Activated T-helper 2 cell treated with anti-CD3 and anti-CD28 coated beads, Interferon-gamma antibody, Interleukin-2, Interleukin-4, amounts not matched to agents 10 μg/mL and 5 μg/mL and 100 μg/mL, durations not matched to agents 14 hours and 24 hours and 36 hours (primary cell): ENCODE measurements at regions of chr10 and their contacts with region 1.

Region 1: DNA sequence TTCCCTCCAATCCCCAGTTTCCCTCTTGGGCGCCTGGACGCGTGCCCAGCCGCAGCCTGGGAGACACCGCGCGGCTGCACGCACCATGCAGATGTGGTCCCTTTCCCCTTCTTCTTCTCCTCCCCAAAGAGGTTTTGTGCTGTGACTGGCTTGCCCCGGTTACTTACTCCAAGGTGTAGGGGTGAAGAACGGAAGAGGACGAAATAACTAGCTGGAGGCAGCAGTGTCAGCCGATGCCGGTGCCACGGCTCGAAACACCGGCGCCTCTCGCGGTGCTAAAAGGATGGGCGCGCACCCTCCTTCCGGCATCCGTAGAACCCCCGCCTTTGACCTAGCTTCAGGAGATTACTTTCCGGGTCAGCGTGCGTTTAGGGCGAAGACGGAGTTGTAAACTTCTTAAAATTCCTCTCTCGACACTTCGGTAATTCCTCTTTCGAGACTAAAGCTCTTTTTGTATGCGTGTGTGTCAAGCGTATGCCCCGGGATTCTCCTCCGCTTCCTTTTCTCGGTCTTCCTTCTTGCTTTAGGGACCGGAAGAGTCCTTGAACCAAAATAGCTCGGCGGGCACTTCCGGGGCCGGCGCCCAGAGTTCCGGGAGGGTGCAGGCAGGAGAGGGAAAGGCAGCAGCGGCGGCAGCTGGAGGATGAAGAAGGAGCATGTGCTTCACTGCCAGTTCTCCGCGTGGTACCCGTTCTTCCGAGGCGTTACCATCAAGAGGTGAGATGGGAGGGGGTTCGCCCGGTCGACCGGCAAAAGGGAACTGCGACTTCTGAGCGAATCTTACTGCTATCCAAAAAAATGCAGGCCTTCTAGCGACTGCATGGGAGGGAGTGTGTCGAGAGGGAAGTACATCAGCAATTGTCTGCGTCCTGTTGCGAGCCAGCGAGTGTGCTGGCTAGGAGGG is at the starts of genes CDC123 and NUDT5:
- DNase-seq: peak; percentile 82
- H3K4me3 Mint-ChIP-seq: peak within 1 kb of the TSS; percentile 94
- H3K27ac Mint-ChIP-seq: peak within 1 kb of the TSS; percentile 98
- H3K4me1 Mint-ChIP-seq: peaks cover 39% of the 10 kb centered on the region
- H3K27me3 Mint-ChIP-seq: no peaks in the 10 kb centered on the region
- total RNA-seq, gene CDC123: 153 and 156 TPM in 2 replicates
- total RNA-seq, gene NUDT5: 109 and 112 TPM in 2 replicates

Region 2: GRCh38 chr10:12018438-12019282 is 177.2 kb before region 1 on chr10:
- intact Hi-C with region 1: no loop called
- DNase-seq: no peak
- H3K4me3 Mint-ChIP-seq: no peak overlapping the region
- H3K27ac Mint-ChIP-seq: no peak overlapping the region
- H3K4me1 Mint-ChIP-seq: peaks cover 15% of the 10 kb centered on the region
- H3K27me3 Mint-ChIP-seq: no peaks in the 10 kb centered on the region

Region 3: GRCh38 chr10:12042797-12043651 is 152.8 kb before region 1 on chr10 and contains the start of gene UPF2:
- intact Hi-C with region 1: loop called (anchors 1 kb)
- DNase-seq: peak; percentile 95
- H3K4me3 Mint-ChIP-seq: peak within 1 kb of the TSS; percentile 99
- H3K27ac Mint-ChIP-seq: peak within 1 kb of the TSS; percentile 96
- H3K4me1 Mint-ChIP-seq: peaks cover 23% of the 10 kb centered on the region
- H3K27me3 Mint-ChIP-seq: no peaks in the 10 kb centered on the region
- total RNA-seq, gene UPF2: 41.0 and 41.4 TPM in 2 replicates

Region 4: GRCh38 chr10:12121673-12122072 is 74.2 kb before region 1 on chr10:
- intact Hi-C with region 1: loop called (anchors 5 kb)
- DNase-seq: no peak
- H3K4me3 Mint-ChIP-seq: no peak overlapping the region
- H3K27ac Mint-ChIP-seq: peak overlapping the region; percentile 96
- H3K4me1 Mint-ChIP-seq: peaks cover 26% of the 10 kb centered on the region
- H3K27me3 Mint-ChIP-seq: no peaks in the 10 kb centered on the region

Region 5: GRCh38 chr10:12181065-12181775 is 14.6 kb before region 1 on chr10:
- intact Hi-C with region 1: loop called (anchors 2 kb)
- DNase-seq: peak; percentile 69
- H3K4me3 Mint-ChIP-seq: peak overlapping the region; percentile 13
- H3K27ac Mint-ChIP-seq: peak overlapping the region; percentile 88
- H3K4me1 Mint-ChIP-seq: peaks cover 26% of the 10 kb centered on the region
- H3K27me3 Mint-ChIP-seq: no peaks in the 10 kb centered on the region

Region 6: GRCh38 chr10:12241810-12242529 is 46.1 kb after region 1 on chr10:
- intact Hi-C with region 1: loop called (anchors 5 kb)
- DNase-seq: no peak
- H3K4me3 Mint-ChIP-seq: no peak overlapping the region
- H3K27ac Mint-ChIP-seq: peak overlapping the region; percentile 85
- H3K4me1 Mint-ChIP-seq: peaks cover 23% of the 10 kb centered on the region
- H3K27me3 Mint-ChIP-seq: no peaks in the 10 kb centered on the region

Region 7: GRCh38 chr10:13099666-13100348 is 904.0 kb after region 1 on chr10 and contains the start of gene OPTN:
- intact Hi-C with region 1: loop called (anchors 10 kb)
- DNase-seq: peak; percentile 71
- H3K4me3 Mint-ChIP-seq: peak within 1 kb of the TSS; percentile 88
- H3K27ac Mint-ChIP-seq: peak within 1 kb of the TSS; percentile 86
- H3K4me1 Mint-ChIP-seq: peaks cover 44% of the 10 kb centered on the region
- H3K27me3 Mint-ChIP-seq: no peaks in the 10 kb centered on the region
- total RNA-seq, gene OPTN: 49.0 and 53.2 TPM in 2 replicates